Naive thymus-derived CD4-positive, alpha-beta T cell (primary cell): ENCODE measurements at regions of chr9 and their contacts with region 1.

Region 1: DNA sequence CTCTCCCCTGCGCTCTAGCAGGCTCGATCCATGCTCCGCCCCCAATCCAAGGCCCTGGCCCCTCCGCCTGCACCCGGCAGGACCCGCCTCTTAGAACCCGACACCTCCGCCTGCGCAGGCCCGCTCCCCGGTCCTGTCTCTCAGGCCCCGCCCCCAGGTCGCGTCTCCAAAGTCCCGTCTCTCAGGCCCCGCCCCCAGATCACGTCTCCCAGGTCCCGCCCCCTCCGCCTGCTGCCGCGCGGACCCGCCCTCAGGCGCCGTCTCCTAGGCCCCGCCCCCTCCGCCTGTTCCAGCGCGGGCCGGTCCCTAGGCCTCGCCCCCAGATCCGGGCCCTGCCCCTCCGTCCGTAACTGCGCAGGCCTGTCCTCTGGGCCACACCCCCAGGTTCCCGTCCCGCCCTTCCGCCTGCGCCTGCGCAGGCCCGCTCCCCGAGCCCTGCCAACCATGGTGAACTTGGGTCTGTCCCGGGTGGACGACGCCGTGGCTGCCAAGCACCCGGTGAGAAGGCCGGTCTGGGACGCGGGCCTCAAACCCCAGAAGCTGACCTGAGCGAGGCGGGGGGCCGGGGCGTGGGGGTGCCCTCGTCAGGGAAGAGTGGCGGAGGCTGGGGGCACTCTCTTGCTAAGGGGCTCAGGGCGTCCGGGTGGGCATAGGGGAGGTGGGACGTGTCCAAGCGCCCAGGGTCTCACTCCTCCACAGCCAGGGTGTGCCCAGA is at the start of gene TMEM141:
- DNase-seq: peak; percentile 99 to 100 (median 99)
- ATAC-seq: peak; percentile 92
- H3K4me3 ChIP-seq: peak within 1 kb of the TSS; percentile 94
- H3K4me3 Mint-ChIP-seq: peak within 1 kb of the TSS; percentile 76 to 90 (median 86)
- H3K27ac ChIP-seq: peak within 1 kb of the TSS; percentile 91
- H3K27ac Mint-ChIP-seq: peak within 1 kb of the TSS; percentile 57 to 98 (median 92)
- H3K4me1 ChIP-seq: peaks cover 18 to 22% of the 10 kb centered on the region in 2 donors
- H3K4me1 Mint-ChIP-seq: peaks cover 10 to 40% (median 31%) of the 10 kb centered on the region in 7 donors
- H3K27me3 ChIP-seq: no peaks in the 10 kb centered on the region
- H3K27me3 Mint-ChIP-seq: peaks cover 0 to 16% (median 0%) of the 10 kb centered on the region in 5 donors
- total RNA-seq, gene TMEM141: 27.2 to 54.9 (median 36.2) TPM

Region 2: DNA sequence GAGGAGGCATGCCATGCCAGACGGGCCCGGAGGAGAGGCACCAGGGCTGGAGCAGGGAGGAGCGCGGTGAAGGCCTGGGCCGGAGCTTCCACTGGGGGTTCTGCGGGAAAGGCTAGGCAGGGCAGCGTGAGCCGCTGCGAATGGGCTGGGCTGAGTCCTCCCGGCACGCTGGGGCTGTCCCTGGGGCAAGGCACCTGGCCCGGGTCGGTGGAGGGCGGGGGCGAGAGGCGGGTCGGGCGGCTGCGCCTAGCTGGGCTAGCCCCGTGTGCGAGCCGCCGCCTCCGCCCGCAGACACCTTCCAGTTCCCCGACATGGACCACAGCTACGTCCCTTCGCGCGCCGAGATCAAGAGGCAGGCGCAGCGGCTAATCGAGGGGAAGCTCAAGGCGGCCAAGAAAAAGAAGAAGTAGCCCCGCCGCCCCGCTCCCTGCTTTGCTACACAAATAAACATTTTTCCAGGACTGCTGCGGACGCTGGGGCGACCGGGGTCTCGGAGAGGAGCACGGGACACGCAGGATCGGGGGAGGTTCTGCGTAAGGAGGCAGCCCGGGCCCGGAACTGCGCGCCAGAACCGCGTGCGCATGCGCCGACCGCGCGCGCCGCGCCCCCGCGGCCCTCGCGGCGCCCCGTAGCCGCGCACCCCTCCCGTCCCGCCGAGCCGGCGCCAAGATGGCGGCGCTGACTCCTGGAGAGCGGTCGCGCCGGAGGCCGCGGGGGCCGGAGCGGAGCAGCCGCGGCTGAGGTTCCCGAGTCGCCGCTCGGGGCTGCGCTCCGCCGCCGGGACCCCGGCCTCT is 16.4 kb after region 1 on chr9 and contains the start of gene RABL6:
- CTCF ChIA-PET with region 1: interaction called, 9 read pairs
- POLR2A ChIA-PET with region 1: interaction called, 38 read pairs
- intact Hi-C with region 1: loop called (anchors 1 kb)
- DNase-seq: peak; percentile 70 to 92 (median 86)
- ATAC-seq: peak; percentile 95
- H3K4me3 ChIP-seq: peak within 1 kb of the TSS; percentile 69
- H3K4me3 Mint-ChIP-seq: peak within 1 kb of the TSS; percentile 78 to 92 (median 90)
- H3K27ac ChIP-seq: peak within 1 kb of the TSS; percentile 94
- H3K27ac Mint-ChIP-seq: peak within 1 kb of the TSS; percentile 76 to 95 (median 90)
- H3K4me1 ChIP-seq: peaks cover 20 to 32% of the 10 kb centered on the region in 2 donors
- H3K4me1 Mint-ChIP-seq: peaks cover 22 to 52% (median 33%) of the 10 kb centered on the region in 7 donors
- H3K27me3 ChIP-seq: no peaks in the 10 kb centered on the region
- H3K27me3 Mint-ChIP-seq: peaks cover 0 to under 1% (median 0%) of the 10 kb centered on the region in 5 donors
- total RNA-seq, gene RABL6: 59.6 to 100 (median 60.9) TPM

Region 3: DNA sequence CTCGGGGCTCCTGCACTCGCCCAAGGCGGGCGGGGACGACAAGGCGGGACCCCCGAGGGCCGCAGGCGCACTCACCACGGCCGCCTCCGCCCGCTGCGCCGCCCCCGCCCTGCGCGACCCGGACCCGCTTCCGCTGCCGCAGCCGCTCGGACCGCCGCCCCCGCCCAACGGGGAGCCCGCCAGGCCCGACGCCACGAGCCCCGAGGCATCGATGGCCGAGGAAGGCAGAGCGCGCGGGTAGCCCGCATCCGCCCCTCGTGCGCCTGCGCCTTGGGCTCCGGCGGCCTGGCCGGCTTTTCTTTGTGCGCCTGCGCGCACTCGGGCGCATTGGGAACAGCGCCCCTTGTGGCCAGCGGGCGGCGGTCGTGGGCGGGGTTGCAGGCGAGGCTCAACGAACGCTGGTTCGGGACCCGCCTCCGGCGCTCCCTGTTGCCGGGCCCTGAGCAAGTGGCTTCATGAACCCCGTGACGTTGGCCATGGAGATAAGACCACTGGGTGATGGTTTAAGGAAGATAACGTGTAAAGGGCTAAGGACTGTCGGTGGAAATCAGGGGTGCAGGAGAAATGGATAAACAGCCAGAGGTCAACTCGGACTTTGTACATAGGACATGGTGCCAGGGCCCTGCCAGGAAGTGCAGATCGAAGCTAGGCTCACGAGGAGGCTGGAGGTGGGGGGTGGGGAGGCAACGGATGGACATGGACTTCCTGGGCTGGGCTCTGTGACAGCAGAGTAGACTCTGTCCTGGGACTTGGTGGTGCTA is 153.6 kb after region 1 on chr9 and contains the starts of genes C8G and FBXW5:
- CTCF ChIA-PET with region 1: no interaction called
- POLR2A ChIA-PET with region 1: no interaction called
- intact Hi-C with region 1: loop called (anchors 1 to 2 kb)
- DNase-seq: peak; percentile 88 to 99 (median 96)
- ATAC-seq: peak; percentile 92
- H3K4me3 ChIP-seq: peak within 1 kb of the TSS; percentile 72
- H3K4me3 Mint-ChIP-seq: peak within 1 kb of the TSS; percentile 71 to 85 (median 81)
- H3K27ac ChIP-seq: peak within 1 kb of the TSS; percentile 77
- H3K27ac Mint-ChIP-seq: peak within 1 kb of the TSS in 8 of 9 donors; percentile 63 to 90 (median 79)
- H3K4me1 ChIP-seq: peaks cover 10 to 11% of the 10 kb centered on the region in 2 donors
- H3K4me1 Mint-ChIP-seq: peaks cover 0 to 14% (median 5%) of the 10 kb centered on the region in 7 donors
- H3K27me3 ChIP-seq: no peaks in the 10 kb centered on the region
- H3K27me3 Mint-ChIP-seq: no peaks in the 10 kb centered on the region
- total RNA-seq, gene C8G: 0.77 to 3.6 (median 1.4) TPM
- total RNA-seq, gene FBXW5: 54.3 to 105 (median 94.5) TPM

Region 4: GRCh38 chr9:137064027-137064879 is 273.2 kb after region 1 on chr9:
- CTCF ChIA-PET with region 1: interaction called, 6 read pairs
- POLR2A ChIA-PET with region 1: no interaction called
- intact Hi-C with region 1: loop called (anchors 1 to 10 kb)
- DNase-seq: peak in 4 of 9 donors; percentile 39 to 78 (median 62)
- ATAC-seq: peak; percentile 53
- H3K4me3 ChIP-seq: no peak overlapping the region
- H3K4me3 Mint-ChIP-seq: no peak overlapping the region
- H3K27ac ChIP-seq: no peak overlapping the region
- H3K27ac Mint-ChIP-seq: no peak overlapping the region
- H3K4me1 ChIP-seq: peaks cover 0 to 5% of the 10 kb centered on the region in 2 donors
- H3K4me1 Mint-ChIP-seq: peaks cover 4 to 15% (median 5%) of the 10 kb centered on the region in 7 donors
- H3K27me3 ChIP-seq: no peaks in the 10 kb centered on the region
- H3K27me3 Mint-ChIP-seq: no peaks in the 10 kb centered on the region

Region 5: GRCh38 chr9:137188490-137189296 is 397.6 kb after region 1 on chr9 and contains the starts of genes ANAPC2 and SSNA1:
- CTCF ChIA-PET with region 1: interaction called, 3 read pairs
- POLR2A ChIA-PET with region 1: no interaction called
- intact Hi-C with region 1: loop called in 1 of 2 experiments (anchors 1 kb)
- DNase-seq: peak; percentile 86 to 99 (median 93)
- ATAC-seq: peak; percentile 91
- H3K4me3 ChIP-seq: peak within 1 kb of the TSS; percentile 98
- H3K4me3 Mint-ChIP-seq: peak within 1 kb of the TSS; percentile 91 to 99 (median 92)
- H3K27ac ChIP-seq: peak within 1 kb of the TSS; percentile 99
- H3K27ac Mint-ChIP-seq: peak within 1 kb of the TSS; percentile 85 to 96 (median 93)
- H3K4me1 ChIP-seq: peaks cover 30 to 32% of the 10 kb centered on the region in 2 donors
- H3K4me1 Mint-ChIP-seq: peaks cover 14 to 61% (median 32%) of the 10 kb centered on the region in 7 donors
- H3K27me3 ChIP-seq: no peaks in the 10 kb centered on the region
- H3K27me3 Mint-ChIP-seq: no peaks in the 10 kb centered on the region
- total RNA-seq, gene ANAPC2: 77.3 to 147 (median 134) TPM
- total RNA-seq, gene SSNA1: 37.9 to 75.6 (median 46.8) TPM

Region 6: GRCh38 chr9:137453643-137454081 is 662.6 kb after region 1 on chr9:
- CTCF ChIA-PET with region 1: no interaction called
- POLR2A ChIA-PET with region 1: no interaction called
- intact Hi-C with region 1: loop called (anchors 2 to 5 kb)
- DNase-seq: peak; percentile 51 to 76 (median 67)
- ATAC-seq: peak; percentile 80
- H3K4me3 ChIP-seq: no peak overlapping the region
- H3K4me3 Mint-ChIP-seq: peak overlapping the region in 9 of 10 donors; percentile 39 to 79 (median 65)
- H3K27ac ChIP-seq: no peak overlapping the region
- H3K27ac Mint-ChIP-seq: peak overlapping the region in 4 of 9 donors; percentile 48 to 83 (median 60)
- H3K4me1 ChIP-seq: peaks cover 27 to 48% of the 10 kb centered on the region in 2 donors
- H3K4me1 Mint-ChIP-seq: peaks cover 5 to 72% (median 40%) of the 10 kb centered on the region in 7 donors
- H3K27me3 ChIP-seq: no peaks in the 10 kb centered on the region
- H3K27me3 Mint-ChIP-seq: no peaks in the 10 kb centered on the region